A549 (cell line): ENCODE measurements at regions of chr5 and their contacts with region 1.

Region 1: DNA sequence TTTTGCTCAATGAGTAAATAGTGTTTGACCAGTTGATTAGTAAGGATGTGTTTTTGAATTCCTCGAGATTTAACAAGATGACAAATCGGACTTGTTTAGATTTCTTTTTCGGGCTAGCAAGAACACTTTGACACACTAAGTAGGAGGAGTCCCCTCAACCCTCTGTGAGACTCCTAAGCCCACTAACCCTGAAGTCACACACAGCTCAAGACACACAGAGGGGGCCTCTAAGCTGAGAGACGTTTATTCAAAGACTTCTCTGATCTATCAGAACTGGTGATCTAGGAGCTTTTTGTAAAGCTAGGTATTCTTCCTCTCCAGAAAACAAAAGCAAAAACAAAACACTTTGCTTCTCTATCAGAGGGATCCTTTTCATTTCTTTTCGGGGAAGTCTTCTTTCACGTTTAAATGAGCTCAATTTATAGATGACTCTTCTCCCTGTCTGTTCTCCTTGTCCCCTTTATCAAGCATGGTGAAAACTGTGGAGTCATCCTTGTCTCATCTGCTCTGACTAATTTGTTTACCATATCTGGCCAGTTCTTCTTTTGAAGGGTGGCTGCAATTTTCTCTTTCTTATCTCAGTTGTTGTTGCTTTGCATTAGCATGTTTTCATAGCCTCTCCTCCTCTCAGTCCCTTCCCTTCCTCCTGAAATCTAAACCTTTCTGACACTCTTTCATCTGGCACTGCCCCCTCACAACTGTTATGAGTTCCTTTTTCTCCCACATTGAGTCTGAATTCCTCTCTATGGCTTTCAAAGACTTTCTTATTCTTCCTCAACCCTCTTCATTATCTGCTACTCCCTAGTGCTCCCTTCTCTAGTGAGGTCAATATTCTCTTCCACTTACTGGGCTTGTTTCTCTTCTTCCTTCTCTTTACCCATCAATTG is 68.5 kb upstream of the RAI14 start:
- DNase-seq: peak; percentile 60 to 80
- ATAC-seq: peak in 1 of 2 experiments; percentile 19; a peak in 3 of 6 replicates
- H3K4me3 ChIP-seq: peak overlapping the region; percentile 22; the same call in 2 of the 3 replicates
- H3K27ac ChIP-seq: peak overlapping the region; percentile 97 to 98
- H3K4me1 ChIP-seq: peaks cover 56% of the 10 kb centered on the region
- CTCF ChIP-seq: no peak
- EP300 ChIP-seq: peak; percentile 40 to 50; a peak in 2 of 5 replicates
- POLR2A ChIP-seq: no peak
- RAD21 ChIP-seq: no peak; a peak in 1 of 5 replicates

Region 2: DNA sequence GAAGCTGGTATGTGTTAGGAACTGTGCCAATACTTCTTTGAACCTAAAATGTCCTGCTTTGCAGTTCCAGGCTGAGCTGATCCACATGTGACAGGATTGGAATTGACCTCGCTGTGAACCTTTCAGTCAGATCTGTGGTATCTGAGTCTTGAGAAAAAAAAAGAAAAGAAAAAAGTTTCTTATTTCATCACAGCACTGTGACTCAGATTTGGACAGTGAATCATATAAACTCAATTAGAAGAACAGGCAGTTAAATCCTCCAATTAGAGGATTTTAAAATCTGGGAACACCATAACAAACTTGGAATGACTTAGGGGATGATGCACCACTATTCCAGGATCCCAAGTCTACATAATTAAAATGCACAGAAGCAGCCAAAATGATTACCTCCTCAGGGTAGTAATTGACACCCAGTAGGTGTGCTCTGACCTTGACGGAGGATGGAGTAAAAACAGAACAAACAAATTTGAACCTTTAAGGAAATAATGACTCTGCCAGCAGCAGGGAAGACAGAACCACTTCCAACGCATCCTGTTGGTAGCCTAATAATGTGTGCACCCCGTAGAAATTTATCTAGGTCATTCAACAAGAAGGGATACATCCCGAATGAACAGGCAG is 10.7 kb after region 1 on chr5:
- CTCF ChIA-PET with region 1: interaction called, 6 read pairs
- POLR2A ChIA-PET with region 1: interaction called, 38 read pairs
- DNase-seq: peak; percentile 78 to 85
- ATAC-seq: peak; percentile 84 to 87
- H3K4me3 ChIP-seq: no peak overlapping the region
- H3K27ac ChIP-seq: peak overlapping the region; percentile 79 to 87
- H3K4me1 ChIP-seq: peaks cover 38% of the 10 kb centered on the region
- CTCF ChIP-seq: no peak
- EP300 ChIP-seq: peak; percentile 64 to 82; a peak in 3 of 5 replicates
- POLR2A ChIP-seq: no peak
- RAD21 ChIP-seq: peak in 1 of 2 experiments; percentile 16; a peak in 2 of 5 replicates

Region 3: GRCh38 chr5:34608859-34609648 is 21.5 kb after region 1 on chr5:
- CTCF ChIA-PET with region 1: interaction called, 3 read pairs
- POLR2A ChIA-PET with region 1: interaction called, 22 read pairs
- DNase-seq: peak; percentile 55 to 69
- ATAC-seq: peak; percentile 84 to 85
- H3K4me3 ChIP-seq: no peak overlapping the region
- H3K27ac ChIP-seq: peak overlapping the region; percentile 76 to 90
- H3K4me1 ChIP-seq: peaks cover 41% of the 10 kb centered on the region
- CTCF ChIP-seq: no peak
- EP300 ChIP-seq: 0 out of 5 replicates have a peak, but pooled peaks of 1 of the 2 experiments have one; percentile 29
- POLR2A ChIP-seq: no peak
- RAD21 ChIP-seq: peak in 1 of 2 experiments; percentile 21; a peak in 1 of 5 replicates

Region 4: DNA sequence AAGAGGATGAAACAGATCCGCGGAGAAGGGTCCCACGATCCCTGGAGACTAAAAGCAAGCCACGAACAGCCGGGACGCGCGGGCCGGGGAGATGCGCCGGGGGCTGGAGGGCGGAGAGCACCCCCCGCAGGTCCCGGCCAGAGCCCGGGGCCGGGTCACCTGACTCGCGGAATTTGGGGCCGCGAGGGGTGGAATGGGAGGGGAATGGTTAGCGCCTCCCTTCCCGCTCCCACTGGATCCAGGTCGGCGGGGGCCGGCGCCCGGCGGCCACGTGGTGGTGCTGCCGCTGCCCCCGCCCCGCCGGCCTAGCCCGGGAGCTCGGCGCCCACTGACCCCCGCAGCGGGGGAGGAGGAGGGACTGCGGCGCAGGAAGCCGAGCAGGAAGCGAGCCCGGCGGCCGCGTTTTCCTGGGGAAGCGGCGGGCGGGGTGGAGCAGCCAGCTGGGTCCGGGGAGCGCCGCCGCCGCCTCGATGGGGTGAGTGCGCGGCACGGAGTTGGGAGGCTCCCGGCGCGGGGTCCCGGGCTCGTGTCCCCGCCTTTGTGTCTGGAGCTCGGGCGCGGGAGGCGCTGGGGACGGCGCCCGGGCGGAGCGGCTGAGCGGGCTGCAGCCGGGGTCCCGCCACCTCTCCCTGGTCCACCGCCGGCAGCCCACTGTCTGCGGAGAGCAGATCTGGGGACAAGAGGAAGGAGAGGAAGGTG is 68.6 kb after region 1 on chr5 and contains the start of gene RAI14:
- CTCF ChIA-PET with region 1: interaction called, 6 read pairs
- POLR2A ChIA-PET with region 1: interaction called, 67 read pairs
- DNase-seq: peak; percentile 81 to 89
- ATAC-seq: peak; percentile 84 to 89
- H3K4me3 ChIP-seq: peak within 1 kb of the TSS; percentile 85
- H3K27ac ChIP-seq: peak within 1 kb of the TSS; percentile 95 to 98
- H3K4me1 ChIP-seq: peaks cover 49% of the 10 kb centered on the region
- CTCF ChIP-seq: peak; percentile 23
- EP300 ChIP-seq: no peak
- POLR2A ChIP-seq: peak; percentile 50
- RAD21 ChIP-seq: peak; percentile 10 to 59; a peak in 4 of 5 replicates
- polyA plus RNA-seq, gene RAI14: 97.7 and 113 TPM in 2 replicates

Region 5: DNA sequence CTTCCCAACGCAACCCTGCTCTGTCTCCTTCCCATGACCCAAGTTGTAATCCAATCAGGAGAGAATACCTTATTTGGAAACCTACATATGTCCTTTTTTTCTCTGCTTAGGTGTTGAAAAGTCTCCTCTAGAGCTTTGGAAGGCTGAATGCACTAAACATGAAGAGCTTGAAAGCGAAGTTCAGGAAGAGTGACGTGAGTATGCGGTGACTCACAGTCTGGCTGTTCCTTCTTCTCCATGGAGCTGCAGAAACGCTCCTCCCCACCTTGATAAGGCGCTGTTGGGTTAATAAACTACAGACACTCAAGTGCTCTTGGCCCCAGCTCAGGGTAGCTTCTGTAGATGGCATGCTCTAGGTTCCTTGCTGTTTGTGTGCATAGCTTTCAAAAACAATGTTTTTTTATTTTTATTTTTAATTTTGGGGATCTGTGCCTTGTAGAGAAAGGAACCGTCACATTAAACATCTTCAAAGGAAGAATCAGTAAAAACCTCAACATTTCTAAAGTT is 99.2 kb after region 1 on chr5:
- CTCF ChIA-PET with region 1: interaction called, 6 read pairs
- POLR2A ChIA-PET with region 1: interaction called, 29 read pairs
- DNase-seq: peak; percentile 71 to 99
- ATAC-seq: peak; percentile 88 to 95
- H3K4me3 ChIP-seq: peak overlapping the region; percentile 32; the same call in 2 of the 3 replicates
- H3K27ac ChIP-seq: peak overlapping the region; percentile 85 to 93
- H3K4me1 ChIP-seq: peaks cover 91% of the 10 kb centered on the region
- CTCF ChIP-seq: no peak
- EP300 ChIP-seq: peak; percentile 67 to 75; a peak in 2 of 5 replicates
- POLR2A ChIP-seq: no peak
- RAD21 ChIP-seq: peak; percentile 30 to 40; a peak in 4 of 5 replicates

Region 6: GRCh38 chr5:34838785-34839714 is 251.5 kb after region 1 on chr5 and contains the start of gene TTC23L:
- CTCF ChIA-PET with region 1: no interaction called
- POLR2A ChIA-PET with region 1: interaction called, 11 read pairs
- DNase-seq: peak; percentile 92
- ATAC-seq: peak; percentile 96
- H3K4me3 ChIP-seq: peak within 1 kb of the TSS; percentile 62
- H3K27ac ChIP-seq: peak within 1 kb of the TSS; percentile 79 to 90
- H3K4me1 ChIP-seq: no peaks in the 10 kb centered on the region
- CTCF ChIP-seq: no peak
- EP300 ChIP-seq: no peak
- POLR2A ChIP-seq: peak; percentile 84
- RAD21 ChIP-seq: no peak
- polyA plus RNA-seq, gene TTC23L: 0.25 and 0.59 TPM in 2 replicates

Region 7: DNA sequence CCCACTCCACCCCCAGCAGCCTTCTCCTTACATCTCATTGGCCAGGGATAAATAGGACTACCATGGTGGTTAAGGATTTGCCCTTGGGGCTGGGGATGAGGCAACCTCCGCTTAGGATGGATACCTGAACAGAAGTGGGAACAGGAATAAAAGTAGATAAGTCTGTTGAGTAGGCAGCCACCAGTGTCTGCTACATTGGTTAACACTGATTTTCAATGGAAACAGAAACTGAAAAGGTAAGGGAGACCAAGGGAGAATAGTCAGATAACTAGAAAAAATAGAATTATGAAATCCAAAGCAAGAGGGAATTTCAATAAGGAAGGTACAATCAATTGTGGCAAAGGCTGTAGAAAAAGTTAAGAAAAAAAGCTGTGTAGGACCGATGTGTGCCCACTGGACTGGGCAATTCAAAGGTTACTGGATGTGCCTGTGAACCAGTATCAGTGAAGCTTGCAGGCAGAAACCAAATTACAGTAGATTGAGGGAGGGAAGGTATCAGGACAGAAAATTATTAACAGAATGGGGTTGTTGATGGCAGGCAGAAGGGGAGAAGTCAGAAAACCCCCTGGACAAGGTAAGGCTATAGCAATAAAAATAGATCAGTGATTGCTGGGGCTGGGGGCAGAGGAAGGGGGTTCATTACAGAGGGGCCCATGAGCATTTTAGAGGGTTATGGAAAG is 390.5 kb after region 1 on chr5:
- CTCF ChIA-PET with region 1: no interaction called
- POLR2A ChIA-PET with region 1: no interaction called
- DNase-seq: no peak
- ATAC-seq: no peak
- H3K4me3 ChIP-seq: no peak overlapping the region
- H3K27ac ChIP-seq: no peak overlapping the region
- H3K4me1 ChIP-seq: no peaks in the 10 kb centered on the region
- CTCF ChIP-seq: no peak
- EP300 ChIP-seq: no peak
- POLR2A ChIP-seq: no peak
- RAD21 ChIP-seq: no peak